ENCODE measurements at regions of chr6 and their contacts with region 1.

Region 1: GRCh38 chr6:137951064-137951597 is 84.1 kb downstream of the TNFAIP3 start:
- DNase-seq: no peak
- H3K4me3 Mint-ChIP-seq: no peak overlapping the region
- H3K27ac Mint-ChIP-seq: no peak overlapping the region
- H3K4me1 Mint-ChIP-seq: peaks cover 31% of the 10 kb centered on the region
- H3K27me3 Mint-ChIP-seq: no peaks in the 10 kb centered on the region

Region 2: DNA sequence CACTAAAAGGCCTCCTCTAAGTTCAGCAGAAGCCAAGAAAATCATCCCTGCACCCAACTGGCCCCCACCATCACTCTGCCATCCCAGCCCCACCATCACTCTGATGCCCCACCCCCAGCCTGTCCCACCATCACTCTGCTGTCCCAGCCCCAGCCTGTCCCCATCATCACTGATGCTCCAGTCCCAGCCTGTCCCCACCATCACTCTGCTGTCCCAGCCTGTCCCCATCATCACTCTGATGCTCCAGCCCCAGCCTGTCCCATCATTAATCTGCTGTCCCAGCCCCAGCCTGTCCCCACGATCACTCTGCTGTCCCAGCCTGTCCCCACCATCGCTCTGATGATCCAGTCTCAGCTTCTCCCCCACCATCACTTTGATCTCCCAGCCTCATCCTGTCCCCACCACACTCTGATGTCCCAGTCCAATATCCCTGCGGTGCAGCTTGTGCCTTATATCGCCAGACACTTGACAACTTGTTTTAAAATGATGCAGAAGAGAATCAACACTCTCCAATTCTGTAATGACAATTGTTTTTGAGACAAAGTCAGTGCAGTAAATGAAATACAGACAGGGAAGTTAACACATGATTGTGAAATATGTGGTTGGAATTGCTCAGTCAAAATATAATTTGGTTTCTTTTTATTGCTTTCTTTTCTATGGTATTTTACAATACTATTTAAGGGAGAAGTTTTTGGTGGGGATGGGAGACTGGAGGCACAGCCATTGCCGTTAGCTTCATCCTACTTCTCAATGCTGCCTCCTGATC is 16.7 kb after region 1 on chr6:
- CTCF ChIA-PET with region 1: interaction called, 12 read pairs
- intact Hi-C with region 1: loop called (anchors 1 kb)
- DNase-seq: peak; percentile 18
- H3K4me3 Mint-ChIP-seq: no peak overlapping the region
- H3K27ac Mint-ChIP-seq: peak overlapping the region; percentile 85
- H3K4me1 Mint-ChIP-seq: peaks cover 52% of the 10 kb centered on the region
- H3K27me3 Mint-ChIP-seq: no peaks in the 10 kb centered on the region